ENCODE measurements at regions of chr19 and their contacts with region 1.

Region 1: DNA sequence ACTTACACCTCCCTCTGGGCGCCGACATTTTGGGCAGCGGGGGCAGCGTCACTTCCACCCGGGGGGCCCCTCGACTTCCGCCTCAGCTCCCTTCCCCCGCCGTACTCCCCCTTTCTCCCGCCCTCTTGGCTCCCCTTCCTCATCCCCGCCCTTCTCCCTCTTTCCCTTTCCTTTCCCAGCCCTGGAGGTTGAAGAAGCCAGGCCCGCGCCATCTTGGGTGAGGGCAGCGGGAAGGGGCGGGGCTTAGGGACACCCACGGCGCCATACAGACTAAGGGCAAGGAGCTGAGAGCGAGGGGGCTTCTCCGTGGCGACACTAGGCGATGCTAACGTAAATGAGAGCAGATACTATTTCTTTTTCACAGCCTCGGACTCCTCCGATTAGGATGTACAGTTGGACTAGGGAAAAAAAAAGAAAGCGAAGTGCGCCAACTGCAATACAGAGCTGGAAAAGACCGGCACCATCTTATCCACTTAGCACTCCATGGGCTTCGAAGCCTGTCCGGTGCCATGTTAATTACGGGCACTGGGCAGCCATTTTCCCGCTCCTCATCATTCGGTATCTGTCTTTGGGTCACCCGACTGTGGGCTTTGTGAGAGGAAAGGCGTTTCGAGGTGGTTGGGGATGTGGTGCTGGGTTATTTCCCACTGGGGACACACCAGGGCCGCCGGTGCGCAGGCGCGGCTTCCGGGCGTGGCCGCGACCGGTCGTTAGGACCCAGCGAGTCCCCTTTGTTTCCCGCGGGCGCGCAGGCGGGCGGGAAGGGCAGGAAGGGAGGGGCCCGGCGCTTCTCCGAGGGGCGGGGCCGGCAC is at the start of gene FIZ1:
- DNase-seq: peak; percentile 96 to 99 (median 98)

Region 2: DNA sequence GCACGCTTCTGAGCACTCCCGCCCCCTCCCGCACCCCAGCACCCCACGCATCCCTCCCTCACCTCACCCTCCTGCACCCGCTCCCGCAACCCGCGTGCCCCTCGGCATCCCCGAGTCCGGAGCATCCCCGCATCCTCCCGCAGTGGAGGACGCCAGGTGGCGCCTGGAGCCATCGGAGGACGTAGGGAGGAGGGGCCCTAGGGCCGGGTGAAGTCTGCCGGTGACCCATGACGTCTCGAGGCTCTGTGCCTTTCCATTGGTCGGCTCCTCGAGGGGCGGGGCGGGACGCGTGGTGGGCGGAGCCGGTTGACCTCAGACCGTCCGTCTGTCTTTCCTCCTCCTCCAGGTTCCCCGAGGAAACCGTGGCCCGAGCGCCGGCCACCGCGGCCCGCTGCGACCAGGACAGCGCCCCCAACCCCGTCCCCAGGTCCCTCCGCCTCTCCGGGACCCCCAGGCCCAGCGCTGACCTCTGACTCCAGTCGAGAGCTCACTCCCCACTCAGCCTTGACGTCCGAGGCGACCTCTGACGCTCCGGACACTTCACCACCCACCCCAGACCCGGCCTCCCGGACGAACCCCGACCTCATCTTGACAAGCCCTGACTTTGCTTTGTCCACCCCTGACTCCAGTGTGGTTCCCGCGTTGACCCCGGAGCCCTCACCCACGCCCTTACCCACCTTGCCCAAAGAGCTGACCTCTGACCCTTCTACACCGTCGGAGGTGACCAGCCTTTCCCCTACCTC is 82.6 kb before region 1 on chr19:
- intact Hi-C with region 1: loop called (anchors 2 kb)
- DNase-seq: peak; percentile 89 to 98 (median 96)